B cell (primary cell): ENCODE measurements at regions of chr9 and their contacts with region 1.

Region 1: DNA sequence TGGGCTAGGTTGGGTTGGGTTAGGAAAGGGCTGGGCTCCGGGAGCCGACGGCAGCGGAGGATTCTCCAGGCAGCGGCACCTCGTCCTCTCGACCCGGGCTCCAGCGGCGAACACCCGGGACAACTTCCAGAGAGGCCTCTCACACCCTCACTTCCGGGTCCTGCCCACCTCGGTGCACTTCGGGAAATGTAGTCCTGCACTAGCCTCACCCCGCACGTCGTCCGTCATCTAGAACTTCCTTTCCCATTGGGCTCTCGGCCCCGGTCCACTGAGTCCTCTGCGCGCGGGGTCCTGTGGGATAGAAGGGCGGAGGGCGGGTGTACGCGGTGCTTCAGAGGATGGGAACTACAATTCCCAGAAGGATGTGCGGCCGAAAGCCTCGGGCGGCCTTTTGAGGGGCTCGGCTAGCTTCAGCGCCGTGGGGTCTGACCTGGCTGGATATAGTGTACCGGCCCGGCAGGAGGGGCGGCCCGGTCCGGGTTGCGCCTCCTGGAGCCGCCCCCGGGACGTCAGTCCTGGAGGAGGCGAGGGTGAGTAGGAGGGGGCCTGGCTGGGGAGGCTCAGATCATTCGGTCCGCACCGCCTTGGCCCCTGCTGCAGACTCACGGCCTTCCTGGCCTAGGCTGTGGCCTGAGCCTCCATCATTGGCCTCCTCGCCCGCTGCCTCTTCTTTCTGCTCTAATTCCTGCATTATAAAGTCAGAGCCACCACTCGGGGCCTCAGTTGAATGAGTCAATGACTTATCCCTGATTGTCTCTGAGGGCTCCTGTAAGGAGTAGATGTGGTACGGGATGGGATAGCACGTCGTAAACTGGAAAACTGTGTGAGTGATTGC is at the starts of genes ERP44 and INVS:
- DNase-seq: peak; percentile 98
- ATAC-seq: peak; percentile 99
- H3K4me3 ChIP-seq: peak within 1 kb of the TSS; percentile 79 to 98 (median 95)
- H3K4me3 Mint-ChIP-seq: peak within 1 kb of the TSS; percentile 99
- H3K27ac ChIP-seq: peak within 1 kb of the TSS; percentile 77 to 90
- H3K27ac Mint-ChIP-seq: peak within 1 kb of the TSS; percentile 98
- H3K4me1 ChIP-seq: peaks cover 24 to 27% of the 10 kb centered on the region in 2 donors
- H3K4me1 Mint-ChIP-seq: peaks cover 41% of the 10 kb centered on the region
- H3K27me3 ChIP-seq: no peaks in the 10 kb centered on the region
- H3K27me3 Mint-ChIP-seq: no peaks in the 10 kb centered on the region
- CTCF ChIP-seq: no peak
- total RNA-seq, gene ERP44: 16.9 and 18.4 TPM in 2 replicates
- total RNA-seq, gene INVS: 34.6 and 37.0 TPM in 2 replicates

Region 2: GRCh38 chr9:99221621-99222415 is 877.3 kb before region 1 on chr9 and contains the starts of genes ALG2 and SEC61B:
- CTCF ChIA-PET with region 1: no interaction called
- POLR2A ChIA-PET with region 1: interaction called, 3 read pairs
- intact Hi-C with region 1: loop called (anchors 1 kb)
- DNase-seq: peak; percentile 98
- ATAC-seq: peak; percentile 89
- H3K4me3 ChIP-seq: peak within 1 kb of the TSS; percentile 88 to 96 (median 90)
- H3K4me3 Mint-ChIP-seq: peak within 1 kb of the TSS; percentile 95
- H3K27ac ChIP-seq: peak within 1 kb of the TSS; percentile 98 to 99
- H3K27ac Mint-ChIP-seq: peak within 1 kb of the TSS; percentile 100
- H3K4me1 ChIP-seq: peaks cover 30 to 43% of the 10 kb centered on the region in 2 donors
- H3K4me1 Mint-ChIP-seq: peaks cover 77% of the 10 kb centered on the region
- H3K27me3 ChIP-seq: no peaks in the 10 kb centered on the region
- H3K27me3 Mint-ChIP-seq: no peaks in the 10 kb centered on the region
- CTCF ChIP-seq: no peak
- total RNA-seq, gene ALG2: 42.6 and 46.3 TPM in 2 replicates
- total RNA-seq, gene SEC61B: 70.2 and 78.2 TPM in 2 replicates

Region 3: GRCh38 chr9:100028201-100028784 is 70.8 kb before region 1 on chr9:
- CTCF ChIA-PET with region 1: interaction called, 4 read pairs
- POLR2A ChIA-PET with region 1: no interaction called
- intact Hi-C with region 1: loop called (anchors 1 kb)
- DNase-seq: peak; percentile 83
- ATAC-seq: peak; percentile 99
- H3K4me3 ChIP-seq: no peak overlapping the region
- H3K4me3 Mint-ChIP-seq: no peak overlapping the region
- H3K27ac ChIP-seq: no peak overlapping the region
- H3K27ac Mint-ChIP-seq: peak overlapping the region; percentile 3
- H3K4me1 ChIP-seq: peaks cover 16% of the 10 kb centered on the region in 2 donors
- H3K4me1 Mint-ChIP-seq: peaks cover 26% of the 10 kb centered on the region
- H3K27me3 ChIP-seq: no peaks in the 10 kb centered on the region
- H3K27me3 Mint-ChIP-seq: no peaks in the 10 kb centered on the region
- CTCF ChIP-seq: peak; percentile 99

Region 4: GRCh38 chr9:100084734-100085133 is 14.4 kb before region 1 on chr9:
- CTCF ChIA-PET with region 1: interaction called, 7 read pairs
- POLR2A ChIA-PET with region 1: interaction called, 4 read pairs
- intact Hi-C with region 1: loop called (anchors 1 kb)
- DNase-seq: peak; percentile 76
- ATAC-seq: peak; percentile 68
- H3K4me3 ChIP-seq: peak overlapping the region in 3 of 5 experiments; percentile 55 to 68 (median 58)
- H3K4me3 Mint-ChIP-seq: peak overlapping the region; percentile 73
- H3K27ac ChIP-seq: peak overlapping the region; percentile 80 to 86
- H3K27ac Mint-ChIP-seq: peak overlapping the region; percentile 79
- H3K4me1 ChIP-seq: peaks cover 46 to 70% of the 10 kb centered on the region in 2 donors
- H3K4me1 Mint-ChIP-seq: peaks cover 78% of the 10 kb centered on the region
- H3K27me3 ChIP-seq: no peaks in the 10 kb centered on the region
- H3K27me3 Mint-ChIP-seq: no peaks in the 10 kb centered on the region
- CTCF ChIP-seq: no peak

Region 5: GRCh38 chr9:100206899-100207298 is 107.8 kb after region 1 on chr9:
- CTCF ChIA-PET with region 1: no interaction called
- POLR2A ChIA-PET with region 1: no interaction called
- intact Hi-C with region 1: no loop called
- DNase-seq: no peak
- ATAC-seq: no peak
- H3K4me3 ChIP-seq: no peak overlapping the region
- H3K4me3 Mint-ChIP-seq: no peak overlapping the region
- H3K27ac ChIP-seq: no peak overlapping the region
- H3K27ac Mint-ChIP-seq: no peak overlapping the region
- H3K4me1 ChIP-seq: no peaks in the 10 kb centered on the region
- H3K4me1 Mint-ChIP-seq: peaks cover 9% of the 10 kb centered on the region
- H3K27me3 ChIP-seq: no peaks in the 10 kb centered on the region
- H3K27me3 Mint-ChIP-seq: no peaks in the 10 kb centered on the region
- CTCF ChIP-seq: no peak

Region 6: GRCh38 chr9:100411472-100412283 is 312.6 kb after region 1 on chr9:
- CTCF ChIA-PET with region 1: no interaction called
- POLR2A ChIA-PET with region 1: no interaction called
- intact Hi-C with region 1: loop called (anchors 10 kb)
- DNase-seq: peak; percentile 88
- ATAC-seq: peak; percentile 99
- H3K4me3 ChIP-seq: peak overlapping the region; percentile 62 to 79 (median 75)
- H3K4me3 Mint-ChIP-seq: peak overlapping the region; percentile 85
- H3K27ac ChIP-seq: no peak overlapping the region
- H3K27ac Mint-ChIP-seq: peak overlapping the region; percentile 57
- H3K4me1 ChIP-seq: peaks cover 8 to 12% of the 10 kb centered on the region in 2 donors
- H3K4me1 Mint-ChIP-seq: peaks cover 14% of the 10 kb centered on the region
- H3K27me3 ChIP-seq: peaks cover 0 to 9% (median 3%) of the 10 kb centered on the region in 4 experiments
- H3K27me3 Mint-ChIP-seq: peaks cover 20% of the 10 kb centered on the region
- CTCF ChIP-seq: no peak

Region 7: DNA sequence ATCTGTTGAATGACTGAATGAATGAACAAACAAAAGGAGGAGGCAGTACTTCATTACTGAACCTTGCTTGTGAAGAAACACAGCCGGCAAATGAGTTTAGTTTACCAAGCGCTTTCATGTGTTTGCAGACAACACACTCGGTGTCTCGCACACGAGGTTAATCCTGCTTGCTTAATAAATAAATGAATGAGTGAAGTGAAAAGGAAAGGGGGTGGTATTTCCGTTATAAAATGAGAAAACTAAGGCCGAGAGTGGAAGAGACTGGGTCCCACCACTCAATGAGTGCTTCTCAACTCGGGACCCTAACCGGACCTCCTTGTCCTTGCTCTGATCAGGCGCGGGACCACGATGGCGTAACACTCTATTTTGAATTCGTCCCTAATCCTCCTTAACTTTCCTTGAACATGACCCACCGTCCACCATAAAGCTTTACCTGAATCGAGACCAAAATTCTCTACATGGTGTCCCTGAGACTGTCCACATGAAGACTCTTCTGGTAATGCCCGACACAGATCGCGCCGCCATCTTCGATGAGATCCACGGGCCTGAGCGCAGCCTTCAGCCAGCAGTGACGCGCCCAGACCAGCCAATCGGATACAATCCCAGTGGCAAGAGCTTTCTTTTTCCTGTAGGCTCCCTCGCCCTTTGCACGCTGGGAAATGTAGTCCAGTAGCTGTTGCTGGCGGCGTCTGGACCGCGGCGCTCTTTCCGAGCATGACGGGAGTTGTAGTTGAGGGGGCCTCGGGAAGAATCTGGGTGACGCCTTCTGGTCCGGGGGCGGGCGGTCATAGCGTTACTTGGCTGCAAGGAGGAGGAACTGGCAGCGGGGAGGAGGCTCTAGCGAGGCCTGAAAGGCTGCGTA is 1299.2 kb after region 1 on chr9 and contains the starts of genes MRPL50 and ZNF189:
- CTCF ChIA-PET with region 1: no interaction called
- POLR2A ChIA-PET with region 1: no interaction called
- intact Hi-C with region 1: loop called (anchors 5 kb)
- DNase-seq: peak; percentile 99
- ATAC-seq: peak; percentile 93
- H3K4me3 ChIP-seq: peak within 1 kb of the TSS; percentile 72 to 98 (median 92)
- H3K4me3 Mint-ChIP-seq: peak within 1 kb of the TSS; percentile 100
- H3K27ac ChIP-seq: peak within 1 kb of the TSS; percentile 87 to 97
- H3K27ac Mint-ChIP-seq: peak within 1 kb of the TSS; percentile 99
- H3K4me1 ChIP-seq: peaks cover 20 to 21% of the 10 kb centered on the region in 2 donors
- H3K4me1 Mint-ChIP-seq: peaks cover 74% of the 10 kb centered on the region
- H3K27me3 ChIP-seq: no peaks in the 10 kb centered on the region
- H3K27me3 Mint-ChIP-seq: no peaks in the 10 kb centered on the region
- CTCF ChIP-seq: no peak
- total RNA-seq, gene MRPL50: 16.6 and 18.0 TPM in 2 replicates
- total RNA-seq, gene ZNF189: 25.7 and 30.8 TPM in 2 replicates